ENCODE measurements at regions of chr21 and their contacts with region 1.

Region 1: DNA sequence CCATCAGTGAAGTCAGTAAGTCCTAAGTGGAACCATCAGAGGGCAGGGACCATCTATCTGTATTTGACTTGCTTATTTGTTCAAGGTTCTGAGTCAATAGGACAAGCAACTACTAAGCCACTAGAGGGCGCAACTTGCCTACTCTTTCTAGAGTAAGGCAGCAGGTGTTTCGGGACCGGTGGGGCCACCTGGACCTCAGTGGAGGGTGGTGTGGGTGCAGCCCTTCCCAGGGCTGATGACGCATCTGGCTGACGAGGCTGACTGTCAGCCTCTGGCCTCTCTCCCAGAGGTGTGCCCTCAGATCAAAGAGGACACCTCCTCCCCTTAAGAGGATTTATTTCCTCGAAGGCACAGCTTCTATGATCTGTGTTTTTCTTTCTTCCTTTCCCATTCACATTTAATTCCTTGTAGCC is 6.6 kb downstream of the CBR3 start:
- DNase-seq: peak; percentile 79 to 93 (median 92)
- ATAC-seq: peak; percentile 91 to 99 (median 98)
- H3K4me3 ChIP-seq: no peak overlapping the region
- H3K27ac ChIP-seq: peak overlapping the region in 1 of 4 donors; percentile 59
- H3K4me1 ChIP-seq: peaks cover 0 to 4% (median 0%) of the 10 kb centered on the region in 3 donors
- H3K27me3 ChIP-seq: no peaks in the 10 kb centered on the region
- CTCF ChIP-seq: peak; percentile 81 to 84 (median 81)

Region 2: DNA sequence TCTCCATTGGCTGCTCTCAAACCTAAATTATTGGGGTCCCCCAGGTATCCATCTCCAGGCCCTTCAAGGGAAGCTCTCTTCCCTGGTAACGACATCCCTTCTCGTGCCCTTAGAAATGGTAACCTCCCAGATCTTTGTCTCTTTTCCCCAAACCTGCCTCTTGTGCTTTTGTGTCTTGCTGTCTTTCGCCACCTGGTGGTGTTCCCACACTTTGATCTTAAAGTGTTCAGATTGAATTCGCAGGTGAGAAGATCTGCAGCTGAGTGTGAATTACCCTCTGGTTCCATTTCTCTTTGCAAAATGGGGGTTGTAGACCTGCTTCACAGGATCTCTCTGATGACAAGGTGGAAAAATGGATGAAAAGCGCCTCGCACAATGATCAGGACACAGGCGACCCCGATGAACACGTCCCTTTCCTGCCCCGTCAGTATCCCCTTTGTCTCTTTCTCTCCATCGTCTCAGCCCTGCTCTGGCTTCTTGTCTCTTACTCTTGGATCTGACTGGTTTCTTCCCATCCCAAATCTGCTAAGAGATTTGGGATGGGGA is 68.2 kb after region 1 on chr21:
- intact Hi-C with region 1: loop called in 1 of 3 experiments (anchors 5 kb)
- DNase-seq: peak in 4 of 6 donors; percentile 53 to 71 (median 60)
- ATAC-seq: peak; percentile 79 to 91 (median 89)
- H3K4me3 ChIP-seq: no peak overlapping the region
- H3K27ac ChIP-seq: no peak overlapping the region
- H3K4me1 ChIP-seq: peaks cover 0 to 2% (median 0%) of the 10 kb centered on the region in 3 donors
- H3K27me3 ChIP-seq: no peaks in the 10 kb centered on the region
- CTCF ChIP-seq: peak in 3 of 4 donors; percentile 12 to 40 (median 30)

Measured in pancreas (tissue), 10 donors.